Dendritic cell treated with granulocyte-macrophage colony-stimulating factor and Interleukin-4, amounts not matched to agents 40 ng/mL and 50 ng/mL, for 4 days (primary cell): ENCODE measurements at regions of chr6 and their contacts with region 1.

Region 1: GRCh38 chr6:83221889-83222479 is 28.8 kb downstream of the RWDD2A start:
- H3K4me3 Mint-ChIP-seq: no peak overlapping the region
- H3K27ac Mint-ChIP-seq: no peak overlapping the region
- H3K4me1 Mint-ChIP-seq: no peaks in the 10 kb centered on the region
- H3K27me3 Mint-ChIP-seq: no peaks in the 10 kb centered on the region

Region 2: GRCh38 chr6:82872185-82872584 is 349.8 kb before region 1 on chr6:
- intact Hi-C with region 1: no loop called
- H3K4me3 Mint-ChIP-seq: no peak overlapping the region
- H3K27ac Mint-ChIP-seq: no peak overlapping the region
- H3K4me1 Mint-ChIP-seq: no peaks in the 10 kb centered on the region
- H3K27me3 Mint-ChIP-seq: no peaks in the 10 kb centered on the region

Region 3: DNA sequence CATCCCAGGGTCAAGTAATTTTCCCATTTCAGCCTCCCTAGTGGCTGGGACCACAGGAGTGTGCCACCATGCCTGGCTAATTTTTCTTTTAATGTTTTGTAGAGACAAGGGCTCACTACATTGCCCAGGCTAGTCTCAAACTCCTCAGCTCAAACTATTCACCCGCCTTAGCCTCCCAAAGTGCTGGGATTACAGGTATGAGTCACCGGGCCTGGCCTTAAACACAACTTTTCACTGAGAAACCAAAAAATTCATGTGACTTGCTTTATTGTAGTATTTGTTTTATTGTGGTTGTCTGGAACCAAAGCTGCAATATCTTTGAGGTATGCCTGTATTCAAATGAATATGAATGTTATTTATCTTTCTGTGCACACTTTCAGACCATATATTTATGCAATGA is 43.4 kb after region 1 on chr6:
- intact Hi-C with region 1: no loop called
- H3K4me3 Mint-ChIP-seq: no peak overlapping the region
- H3K27ac Mint-ChIP-seq: no peak overlapping the region
- H3K4me1 Mint-ChIP-seq: no peaks in the 10 kb centered on the region
- H3K27me3 Mint-ChIP-seq: no peaks in the 10 kb centered on the region

Region 4: GRCh38 chr6:83417880-83418663 is 196.1 kb after region 1 on chr6:
- intact Hi-C with region 1: loop called (anchors 5 kb)
- H3K4me3 Mint-ChIP-seq: no peak overlapping the region
- H3K27ac Mint-ChIP-seq: no peak overlapping the region
- H3K4me1 Mint-ChIP-seq: peaks cover 22% of the 10 kb centered on the region
- H3K27me3 Mint-ChIP-seq: peaks cover 2% of the 10 kb centered on the region

Region 5: GRCh38 chr6:83514866-83515466 is 293.0 kb after region 1 on chr6:
- intact Hi-C with region 1: loop called (anchors 2 kb)
- H3K4me3 Mint-ChIP-seq: no peak overlapping the region
- H3K27ac Mint-ChIP-seq: no peak overlapping the region
- H3K4me1 Mint-ChIP-seq: peaks cover 18% of the 10 kb centered on the region
- H3K27me3 Mint-ChIP-seq: peaks cover 48% of the 10 kb centered on the region

Region 6: DNA sequence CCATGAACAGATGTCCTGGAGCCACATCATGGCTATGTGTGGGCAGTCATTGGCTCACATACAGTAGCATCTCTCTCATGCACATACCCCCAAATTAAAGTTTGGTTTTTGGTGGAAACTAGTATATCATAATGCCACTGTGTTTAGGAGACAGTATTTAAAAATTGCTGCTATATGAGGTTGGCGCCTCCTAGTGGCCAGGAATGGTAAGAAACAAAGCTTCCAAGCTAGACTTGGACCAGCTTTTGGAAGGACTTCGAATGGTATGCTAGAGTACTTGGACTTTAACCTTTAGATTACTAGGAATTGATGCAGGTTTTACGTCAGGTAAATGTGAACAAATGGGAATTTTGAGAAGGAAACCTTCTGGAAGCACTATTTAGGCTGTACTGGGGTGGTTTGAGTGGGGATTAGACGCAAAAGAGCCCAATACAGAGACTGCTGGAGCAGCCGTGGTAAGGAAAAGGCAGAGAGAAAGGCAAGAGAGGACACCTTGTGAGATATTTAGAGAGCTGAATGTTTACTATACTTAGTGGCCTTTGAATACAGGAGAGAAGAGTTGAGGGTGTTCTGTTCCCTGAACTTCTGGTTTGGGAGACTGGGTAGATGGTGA is 314.2 kb after region 1 on chr6:
- intact Hi-C with region 1: loop called (anchors 5 kb)
- H3K4me3 Mint-ChIP-seq: no peak overlapping the region
- H3K27ac Mint-ChIP-seq: no peak overlapping the region
- H3K4me1 Mint-ChIP-seq: peaks cover 4% of the 10 kb centered on the region
- H3K27me3 Mint-ChIP-seq: peaks cover 21% of the 10 kb centered on the region